ENCODE measurements at regions of chr16 and their contacts with region 1.

Region 1: DNA sequence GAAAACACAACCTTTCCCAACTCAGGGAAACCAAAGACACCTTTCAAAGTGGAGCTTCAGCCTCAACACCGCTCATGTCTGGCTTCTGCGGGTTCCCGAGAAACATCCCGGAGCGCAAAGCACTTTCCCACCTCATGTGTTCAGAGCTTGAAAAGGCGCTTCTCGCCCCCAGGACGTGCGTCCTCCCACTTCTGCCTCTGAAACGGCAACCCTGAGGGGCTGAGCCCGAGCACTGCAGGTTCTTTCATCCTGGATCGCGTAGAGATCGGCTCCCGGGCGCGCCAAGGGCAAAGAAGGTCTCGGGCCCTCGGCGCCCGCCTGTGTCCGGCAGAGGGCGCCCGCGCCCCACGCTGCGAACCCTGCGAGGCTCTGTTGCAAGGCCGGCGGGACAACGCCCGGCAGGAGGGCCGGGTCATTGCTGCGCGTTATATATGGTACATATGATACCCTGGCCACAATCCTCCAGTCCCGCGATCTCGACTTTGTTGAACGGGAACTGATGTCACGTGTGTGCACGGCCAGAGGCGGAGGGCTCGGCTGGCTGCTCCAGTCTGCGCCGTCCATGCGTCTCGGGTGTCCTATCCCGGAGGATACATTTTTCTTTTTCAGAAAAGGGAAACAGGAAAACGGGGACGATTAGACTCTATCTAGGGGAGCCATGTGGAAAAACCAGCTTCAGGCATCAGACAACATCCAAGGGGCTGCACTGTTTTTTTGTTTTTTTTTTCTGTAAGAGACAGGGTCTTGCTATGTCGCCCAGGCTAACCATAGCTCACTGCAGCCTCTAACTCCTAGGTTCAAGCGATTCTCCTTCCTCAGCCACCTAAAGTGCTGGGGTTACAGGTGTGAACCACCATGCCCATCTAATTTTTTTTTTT is 19.1 kb downstream of the COQ7 start:
- DNase-seq: peak; percentile 39 to 75
- ATAC-seq: peak; percentile 92 to 95
- H3K4me3 ChIP-seq: peak overlapping the region; percentile 32 to 61 (median 46)
- H3K27ac ChIP-seq: peak overlapping the region in 1 of 4 donors; percentile 4
- H3K4me1 ChIP-seq: peaks cover 7 to 8% of the 10 kb centered on the region in 2 donors
- H3K27me3 ChIP-seq: no peaks in the 10 kb centered on the region
- CTCF ChIP-seq: peak; percentile 96 to 100 (median 99)
- POLR2A ChIP-seq: no peak

Region 2: DNA sequence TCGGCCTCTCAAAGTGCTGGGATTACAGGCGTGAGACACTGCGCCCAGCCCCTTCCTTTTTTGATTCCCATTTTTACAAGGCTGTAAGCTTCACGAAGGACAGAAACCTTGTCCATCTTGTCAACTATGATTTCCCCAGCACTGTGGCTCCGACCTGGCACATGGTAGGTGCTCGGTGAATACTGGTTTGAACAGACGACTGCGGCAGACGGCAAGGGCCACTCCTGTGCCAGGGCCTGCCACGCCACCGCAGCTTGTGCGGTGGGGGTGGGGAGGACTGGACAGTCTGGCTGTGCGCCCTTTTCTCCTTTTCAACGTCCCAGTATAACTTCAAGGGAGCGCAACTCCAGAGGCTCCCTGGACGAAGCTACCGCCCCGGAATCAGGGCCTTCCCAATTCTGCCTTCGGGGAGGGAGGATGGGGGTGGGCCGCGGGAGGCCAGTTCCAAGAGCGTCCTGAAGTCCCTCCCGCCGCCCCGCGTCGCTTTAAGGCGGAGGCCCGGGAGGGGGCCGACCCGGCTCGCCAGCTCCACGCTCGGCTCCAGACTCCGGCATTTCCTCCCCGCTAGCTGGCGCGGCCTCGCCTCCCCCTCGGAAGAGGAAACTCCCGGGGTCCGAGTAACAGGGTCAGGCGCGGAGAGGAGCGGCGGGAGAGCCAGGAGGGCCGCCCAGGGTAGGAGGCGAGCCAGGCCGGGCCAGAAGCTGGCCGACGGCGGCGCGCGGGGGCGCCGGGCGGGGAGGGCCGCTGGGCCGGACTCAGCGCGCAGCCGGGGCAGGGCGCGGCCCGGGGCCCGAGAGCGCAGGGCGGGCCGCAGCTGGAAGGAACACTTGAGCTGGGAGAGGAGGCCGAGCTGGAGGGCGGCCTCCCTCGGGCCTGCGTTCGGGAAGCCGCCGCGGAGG is 27.1 kb after region 1 on chr16 and contains the start of gene ITPRIPL2:
- in situ Hi-C with region 1: no loop called
- intact Hi-C with region 1: loop called (anchors 2 kb)
- DNase-seq: peak; percentile 76 to 87
- ATAC-seq: peak; percentile 84 to 85
- H3K4me3 ChIP-seq: peak within 1 kb of the TSS; percentile 58 to 76 (median 74)
- H3K27ac ChIP-seq: peak within 1 kb of the TSS; percentile 94 to 95 (median 94)
- H3K4me1 ChIP-seq: peaks cover 42 to 44% of the 10 kb centered on the region in 2 donors
- H3K27me3 ChIP-seq: no peaks in the 10 kb centered on the region
- CTCF ChIP-seq: peak in 2 of 5 experiments; percentile 8 to 27
- POLR2A ChIP-seq: peak; percentile 72 to 75
- total RNA-seq, gene ITPRIPL2: 13.3 to 18.9 (median 18.5) TPM

Region 3: DNA sequence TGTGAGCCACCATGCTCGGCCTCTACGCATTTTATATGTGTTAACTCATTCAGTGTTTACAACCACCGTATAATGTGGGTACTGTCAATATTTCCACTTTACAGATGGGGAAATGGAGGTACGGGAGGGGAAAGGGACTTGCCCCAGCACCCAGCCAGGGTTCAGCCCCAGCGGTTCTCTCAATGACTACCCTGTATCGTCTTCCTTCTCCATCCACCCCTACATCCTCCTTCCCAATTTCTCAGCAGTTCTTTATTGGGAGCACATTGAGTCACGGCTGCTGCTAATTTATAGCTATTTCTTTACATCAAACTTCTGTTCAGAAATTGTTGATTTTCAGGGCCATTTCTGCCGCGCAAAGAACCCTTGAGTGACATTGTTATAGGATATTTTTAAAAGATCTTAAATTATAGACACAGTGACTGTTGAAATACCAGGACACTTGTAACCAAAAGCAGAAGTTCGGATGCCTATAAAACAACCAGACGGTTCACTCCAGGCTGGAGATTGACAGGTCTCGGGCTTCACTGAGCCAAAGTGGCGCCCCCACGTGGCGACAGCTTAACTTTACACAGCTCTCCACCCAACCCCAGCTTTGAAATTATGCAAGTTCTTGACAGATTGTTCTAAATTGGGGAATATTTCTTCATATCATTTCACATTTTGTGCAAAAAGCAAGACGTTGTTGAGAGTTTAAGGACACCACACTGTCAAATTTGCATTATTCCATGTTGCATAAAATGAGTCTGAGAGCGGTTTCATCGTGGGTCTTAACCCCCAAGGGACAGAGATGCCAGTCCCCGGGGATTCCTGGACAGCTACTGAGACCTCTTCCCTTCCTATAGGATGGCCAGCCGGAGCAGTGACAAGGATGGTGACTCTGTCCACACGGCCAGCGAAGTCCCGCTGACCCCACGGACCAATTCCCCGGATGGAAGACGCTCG is 93.3 kb after region 1 on chr16:
- in situ Hi-C with region 1: loop called in 3 of 4 experiments (anchors 5 to 10 kb)
- intact Hi-C with region 1: loop called (anchors 1 kb)
- DNase-seq: peak; percentile 13 to 50
- ATAC-seq: peak in 1 of 2 donors; percentile 70
- H3K4me3 ChIP-seq: no peak overlapping the region
- H3K27ac ChIP-seq: no peak overlapping the region
- H3K4me1 ChIP-seq: no peaks in the 10 kb centered on the region
- H3K27me3 ChIP-seq: no peaks in the 10 kb centered on the region
- CTCF ChIP-seq: peak; percentile 20 to 63 (median 57)
- POLR2A ChIP-seq: no peak

Region 4: GRCh38 chr16:19210280-19210924 is 123.8 kb after region 1 on chr16:
- in situ Hi-C with region 1: no loop called
- intact Hi-C with region 1: no loop called
- DNase-seq: no peak
- ATAC-seq: no peak
- H3K4me3 ChIP-seq: no peak overlapping the region
- H3K27ac ChIP-seq: no peak overlapping the region
- H3K4me1 ChIP-seq: no peaks in the 10 kb centered on the region
- H3K27me3 ChIP-seq: no peaks in the 10 kb centered on the region
- CTCF ChIP-seq: no peak
- POLR2A ChIP-seq: no peak

Region 5: DNA sequence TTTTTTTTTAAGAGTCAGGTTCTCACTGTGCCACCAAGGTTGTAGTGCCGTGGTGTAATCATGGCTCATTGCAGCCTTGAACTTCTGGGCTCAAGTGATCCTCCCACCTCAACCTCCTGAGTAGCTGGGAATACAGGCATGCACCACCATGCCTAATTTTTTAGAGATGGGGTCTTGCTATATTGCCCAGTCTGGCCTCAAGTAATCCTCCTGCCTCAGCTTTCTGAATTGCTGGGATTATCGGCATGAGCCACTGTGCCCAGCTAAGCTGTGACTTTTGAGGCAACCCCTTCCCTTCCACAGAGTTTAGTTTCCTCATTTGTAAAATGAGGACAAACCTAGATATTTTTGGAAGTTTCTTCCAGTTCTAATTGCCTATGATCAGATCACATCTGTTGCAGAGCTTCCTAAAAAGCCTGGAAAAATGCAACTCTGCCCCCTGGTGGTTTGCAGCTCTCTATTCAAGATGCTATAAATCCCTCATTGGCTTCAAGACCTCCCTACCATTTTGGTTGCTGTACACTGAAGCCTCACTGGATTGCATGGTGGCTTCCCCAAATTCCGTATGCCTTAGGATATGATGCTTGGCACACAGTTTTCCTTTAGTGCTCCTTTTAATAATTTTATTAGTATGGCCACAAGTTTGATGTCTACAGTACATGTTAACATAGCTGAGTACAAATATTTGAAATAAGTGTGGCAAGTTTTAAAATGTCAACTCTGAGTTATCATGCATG is 416.0 kb after region 1 on chr16:
- in situ Hi-C with region 1: loop called in 3 of 4 experiments (anchors 10 kb)
- intact Hi-C with region 1: loop called (anchors 2 kb)
- DNase-seq: peak in 1 of 2 donors; percentile 39
- ATAC-seq: peak in 1 of 2 donors; percentile 39
- H3K4me3 ChIP-seq: no peak overlapping the region
- H3K27ac ChIP-seq: no peak overlapping the region
- H3K4me1 ChIP-seq: no peaks in the 10 kb centered on the region
- H3K27me3 ChIP-seq: no peaks in the 10 kb centered on the region
- CTCF ChIP-seq: peak; percentile 9 to 67 (median 59)
- POLR2A ChIP-seq: no peak